ENCODE measurements at regions of chr12 and their contacts with region 1.

Region 1: DNA sequence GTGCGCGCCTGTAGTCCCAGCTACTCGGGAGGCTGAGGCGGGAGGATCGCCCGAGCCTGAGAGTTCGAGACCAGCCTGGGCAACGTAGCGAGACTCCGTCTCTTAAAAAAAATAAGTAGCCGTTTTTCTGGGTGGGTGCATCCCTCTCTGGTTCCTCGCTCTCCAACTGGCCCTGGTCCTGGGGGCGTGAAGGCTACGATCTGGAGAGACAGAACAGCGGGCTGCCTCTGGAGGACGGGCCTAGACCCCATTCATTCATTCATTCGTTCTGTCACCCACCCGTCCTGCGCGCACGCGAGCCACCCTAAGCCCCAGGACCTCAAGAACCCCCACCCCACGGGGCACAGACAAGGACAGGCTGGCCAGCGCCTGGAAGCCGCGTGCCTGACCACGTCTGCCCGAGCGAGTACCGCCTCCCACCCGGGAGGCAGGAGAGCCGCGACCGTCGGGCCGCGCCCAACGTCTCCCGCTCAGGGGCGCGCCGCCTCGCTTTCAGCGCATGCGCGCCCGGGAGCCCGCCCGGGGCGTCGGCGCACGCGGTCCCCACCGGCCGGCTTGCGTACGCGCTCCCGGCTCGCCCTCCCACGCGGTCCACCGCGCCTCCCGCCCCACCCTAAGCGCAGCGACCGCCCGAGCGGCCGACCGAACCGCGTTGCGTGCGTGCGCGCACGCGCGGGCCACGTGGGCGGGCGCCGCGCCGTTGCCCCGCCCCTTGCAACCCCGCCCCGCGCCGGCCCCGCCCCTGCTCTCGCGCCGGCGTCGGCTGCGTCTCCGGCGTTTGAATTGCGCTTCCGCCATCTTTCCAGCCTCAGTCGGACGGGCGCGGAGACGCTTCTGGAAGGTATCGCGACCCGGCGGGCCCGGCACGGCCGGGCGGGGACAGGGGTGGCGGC is at the start of gene RAN:
- DNase-seq: peak; percentile 87
- H3K4me3 Mint-ChIP-seq: peak within 1 kb of the TSS; percentile 99
- H3K27ac Mint-ChIP-seq: peak within 1 kb of the TSS; percentile 99
- H3K4me1 Mint-ChIP-seq: peaks cover 53% of the 10 kb centered on the region
- H3K27me3 Mint-ChIP-seq: no peaks in the 10 kb centered on the region
- total RNA-seq, gene RAN: 1,823 and 1,852 TPM in 2 replicates

Region 2: DNA sequence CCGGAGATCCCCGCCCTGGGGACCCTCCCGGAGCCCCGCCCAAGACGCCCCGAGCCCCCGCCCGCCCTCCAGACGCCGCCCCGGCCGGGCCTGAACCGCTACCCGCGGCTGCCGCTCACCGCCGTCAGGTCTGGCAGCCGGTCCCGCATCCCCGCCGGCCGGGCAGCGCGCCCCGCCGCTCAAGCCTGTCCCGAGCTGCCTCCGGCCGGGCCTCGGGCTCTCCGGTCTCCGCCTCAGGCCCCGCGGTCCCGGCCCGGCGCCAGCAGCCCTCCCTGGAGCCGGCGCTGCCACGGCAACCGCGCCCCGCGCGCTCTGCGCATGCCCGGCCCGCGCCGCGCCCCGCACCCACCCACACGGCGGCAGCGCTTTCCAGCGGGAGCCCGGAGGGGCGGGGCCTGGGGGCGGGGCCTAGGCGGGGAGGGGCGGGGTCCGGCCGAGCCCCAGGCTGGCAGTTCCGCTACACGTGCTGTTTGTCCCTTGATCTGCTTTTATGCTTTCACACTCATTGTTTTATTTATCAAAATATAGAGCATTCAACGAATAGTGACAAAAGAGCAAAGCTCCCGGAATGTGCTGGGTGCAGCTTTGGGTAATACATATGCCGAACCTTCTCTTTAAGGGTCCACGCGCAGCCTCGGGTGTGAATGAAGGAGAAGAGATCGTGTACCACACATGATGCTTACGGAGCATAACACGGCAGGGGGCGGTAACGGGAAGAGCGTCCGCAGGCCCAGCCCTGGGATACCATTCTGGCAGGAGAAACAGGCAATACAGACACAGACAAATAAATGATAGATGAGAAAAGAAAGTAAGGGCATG is 32.4 kb before region 1 on chr12 and contains the start of gene STX2:
- intact Hi-C with region 1: loop called (anchors 1 kb)
- DNase-seq: peak; percentile 87
- H3K4me3 Mint-ChIP-seq: peak within 1 kb of the TSS; percentile 85
- H3K27ac Mint-ChIP-seq: peak within 1 kb of the TSS; percentile 90
- H3K4me1 Mint-ChIP-seq: peaks cover 25% of the 10 kb centered on the region
- H3K27me3 Mint-ChIP-seq: no peaks in the 10 kb centered on the region
- total RNA-seq, gene STX2: 15.9 and 17.9 TPM in 2 replicates

Region 3: DNA sequence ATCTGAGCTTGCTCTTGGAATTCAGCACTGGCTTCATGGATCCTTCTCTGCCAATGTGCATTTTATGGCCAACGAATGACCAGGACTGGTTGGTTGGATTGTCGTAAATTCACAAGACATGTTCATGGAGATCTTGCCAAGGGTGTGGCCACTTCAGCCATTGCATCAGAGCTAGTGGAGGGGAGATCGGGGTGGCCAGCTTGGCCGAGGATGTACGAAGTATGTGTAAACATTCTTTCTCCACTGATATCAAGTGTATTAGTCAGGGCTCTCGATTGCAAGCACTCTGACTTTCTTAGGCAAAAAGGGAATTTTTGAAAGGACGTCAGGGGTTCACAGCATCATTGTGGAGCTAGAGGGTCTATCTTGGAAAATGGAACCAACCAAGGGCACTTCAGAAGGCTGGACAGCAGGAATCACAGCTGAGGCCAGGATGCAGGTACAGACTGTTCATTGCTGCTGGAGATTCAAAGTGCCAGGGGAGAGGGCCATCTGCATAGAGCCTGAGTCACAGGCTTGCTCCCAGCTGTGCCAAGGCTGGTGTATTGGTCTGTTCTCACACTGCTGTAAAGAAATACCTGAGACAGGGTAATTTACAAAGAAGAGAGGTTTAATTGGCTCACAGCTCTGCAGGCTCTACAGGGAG is 49.3 kb after region 1 on chr12:
- intact Hi-C with region 1: no loop called
- DNase-seq: no peak
- H3K4me3 Mint-ChIP-seq: no peak overlapping the region
- H3K27ac Mint-ChIP-seq: no peak overlapping the region
- H3K4me1 Mint-ChIP-seq: no peaks in the 10 kb centered on the region
- H3K27me3 Mint-ChIP-seq: peaks cover 13% of the 10 kb centered on the region

Region 4: DNA sequence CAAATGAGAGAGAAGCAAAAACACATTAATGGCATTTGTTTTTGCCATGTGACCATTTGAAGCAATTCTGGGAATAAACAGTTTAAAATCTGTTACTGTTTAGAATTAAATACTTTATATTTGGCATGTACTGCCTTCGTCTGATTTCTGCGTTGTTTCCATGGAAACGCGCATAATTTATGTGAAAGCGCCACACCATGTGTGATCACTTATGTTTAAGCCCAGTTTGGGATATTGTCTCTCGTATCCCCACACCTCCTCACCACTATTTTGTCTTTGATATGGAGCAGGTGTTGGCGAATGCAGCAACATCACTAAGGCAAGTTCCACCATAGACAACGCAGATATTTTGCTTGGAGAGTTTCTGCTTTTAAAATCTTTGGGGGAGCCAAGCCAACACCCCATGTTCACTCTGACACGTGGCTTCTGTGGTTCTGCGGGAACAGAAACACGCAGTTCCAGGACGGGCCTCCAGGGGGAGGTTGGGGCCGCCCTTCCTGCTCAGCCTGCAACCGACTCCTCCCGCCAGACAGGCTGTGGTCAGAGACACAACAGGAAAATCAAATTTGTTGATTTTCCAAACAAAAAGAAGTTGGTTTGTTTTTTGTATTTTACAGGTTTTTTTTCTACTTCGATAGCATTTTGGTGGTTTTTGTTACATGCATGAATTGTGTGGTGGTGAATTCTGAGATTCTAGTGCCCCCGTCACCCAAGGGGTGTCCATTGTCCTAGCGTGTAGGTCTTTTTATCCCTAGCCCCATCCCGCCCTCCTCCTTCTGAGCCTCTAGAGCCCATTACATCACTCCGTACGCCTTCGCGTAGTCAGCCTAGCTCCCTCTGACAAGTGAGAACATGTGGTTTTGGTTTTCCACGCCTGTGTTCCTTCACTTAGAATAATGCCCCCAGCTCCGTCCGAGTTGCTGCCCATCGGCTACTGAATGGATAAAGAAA is 737.5 kb after region 1 on chr12:
- intact Hi-C with region 1: no loop called
- DNase-seq: peak; percentile 54
- H3K4me3 Mint-ChIP-seq: no peak overlapping the region
- H3K27ac Mint-ChIP-seq: peak overlapping the region; percentile 44
- H3K4me1 Mint-ChIP-seq: peaks cover 56% of the 10 kb centered on the region
- H3K27me3 Mint-ChIP-seq: peaks cover 4% of the 10 kb centered on the region

Region 5: DNA sequence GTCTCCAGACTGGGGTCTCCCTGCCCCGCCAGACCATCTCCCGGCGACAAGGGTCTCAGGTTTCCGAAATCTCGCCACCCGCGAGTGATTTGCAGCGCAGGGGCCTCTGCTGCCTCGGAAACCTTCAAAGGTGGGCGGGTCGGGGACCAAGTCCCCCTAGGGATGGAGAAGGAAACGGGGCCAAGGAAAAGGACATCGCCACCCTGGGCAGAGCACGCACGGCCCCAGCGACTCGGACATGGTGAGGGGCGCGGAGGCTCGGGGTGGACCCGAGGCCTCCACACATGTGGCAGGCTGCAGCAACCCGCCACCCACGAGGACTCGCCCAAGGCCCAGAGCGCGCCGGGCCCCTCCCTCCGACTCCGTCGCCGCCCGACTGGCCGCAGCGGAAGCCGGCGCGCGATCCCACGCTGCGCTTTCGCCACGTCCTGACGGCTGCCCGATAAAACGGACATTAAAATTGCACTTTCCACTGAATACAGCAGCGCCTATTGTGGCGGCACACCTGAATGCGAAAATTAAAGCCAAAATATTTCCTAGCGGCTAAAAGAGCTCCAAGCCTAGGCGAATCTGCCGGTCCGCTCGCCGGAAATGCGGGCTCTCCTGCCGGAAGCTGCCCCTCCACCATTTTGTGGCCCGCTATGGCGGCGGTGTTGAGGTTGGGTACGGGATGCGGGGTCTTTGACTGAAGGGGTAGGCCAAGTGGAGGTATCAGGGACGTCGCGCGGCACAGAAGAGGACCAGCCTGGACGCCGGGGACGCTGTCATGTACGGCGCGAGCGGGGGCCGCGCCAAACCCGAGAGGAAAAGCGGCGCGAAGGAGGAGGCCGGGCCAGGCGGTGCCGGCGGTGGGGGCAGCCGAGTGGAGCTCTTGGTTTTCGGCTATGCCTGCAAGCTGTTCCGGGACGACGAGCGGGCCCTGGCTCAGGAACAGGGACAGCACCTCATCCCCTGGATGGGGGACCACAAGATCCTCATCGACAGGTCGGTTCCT is 839.2 kb after region 1 on chr12 and contains the start of gene SFSWAP:
- intact Hi-C with region 1: loop called (anchors 10 kb)
- DNase-seq: peak; percentile 72
- H3K4me3 Mint-ChIP-seq: peak within 1 kb of the TSS; percentile 93
- H3K27ac Mint-ChIP-seq: peak within 1 kb of the TSS; percentile 92
- H3K4me1 Mint-ChIP-seq: peaks cover 26% of the 10 kb centered on the region
- H3K27me3 Mint-ChIP-seq: peaks cover 4% of the 10 kb centered on the region
- total RNA-seq, gene SFSWAP: 65.3 and 69.3 TPM in 2 replicates

Region 6: DNA sequence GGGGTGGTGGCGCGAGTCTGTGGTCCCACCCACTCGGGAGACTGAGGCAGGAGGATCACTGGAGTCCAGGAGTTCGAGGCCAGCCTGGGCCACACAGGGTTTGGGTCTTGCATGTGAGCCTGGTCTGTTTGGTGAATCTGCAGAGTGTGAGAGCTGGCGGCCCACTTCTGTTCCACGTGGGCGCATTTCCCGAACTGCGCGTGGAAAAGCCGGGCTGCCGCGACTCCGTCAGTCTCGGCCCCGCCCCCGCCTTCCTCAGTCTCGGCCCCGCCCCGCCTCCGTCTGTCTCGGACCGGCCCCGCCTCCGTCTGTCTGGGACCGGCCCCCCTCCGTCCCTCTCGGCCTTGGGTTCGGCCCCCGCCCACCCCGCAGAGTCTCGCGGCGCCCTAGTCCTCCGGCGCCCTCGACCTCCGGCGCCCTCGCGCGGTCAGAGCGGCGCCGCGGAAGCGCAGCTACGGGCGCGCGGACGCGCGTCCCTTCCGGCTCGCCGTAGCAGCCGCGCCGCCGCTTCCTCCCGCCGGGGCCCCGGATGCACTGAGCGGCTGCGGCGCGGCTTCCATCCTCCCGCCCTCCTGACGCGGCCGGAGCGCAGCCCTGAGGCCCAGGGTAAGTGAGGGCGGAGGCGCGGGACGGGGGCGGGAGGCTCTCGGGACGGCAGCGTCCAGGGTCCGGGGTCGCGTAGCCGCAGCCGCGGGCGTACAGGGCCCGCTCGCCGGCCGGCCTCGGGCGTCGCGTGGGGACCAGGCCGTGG is 1078.1 kb after region 1 on chr12 and contains the start of gene EP400:
- intact Hi-C with region 1: loop called (anchors 5 kb)
- DNase-seq: peak; percentile 89
- H3K4me3 Mint-ChIP-seq: peak within 1 kb of the TSS; percentile 92
- H3K27ac Mint-ChIP-seq: peak within 1 kb of the TSS; percentile 90
- H3K4me1 Mint-ChIP-seq: peaks cover 30% of the 10 kb centered on the region
- H3K27me3 Mint-ChIP-seq: no peaks in the 10 kb centered on the region
- total RNA-seq, gene EP400: 66.6 TPM in 2 replicates